ENCODE measurements at regions of chr11 and their contacts with region 1.

Region 1: GRCh38 chr11:66438504-66439466 is at the start of gene MRPL11:
- DNase-seq: peak; percentile 84 to 94
- H3K4me3 ChIP-seq: peak within 1 kb of the TSS; percentile 85 to 98 (median 88)
- H3K27ac ChIP-seq: peak within 1 kb of the TSS; percentile 98
- H3K4me1 ChIP-seq: peaks cover 0 to 5% (median 2%) of the 10 kb centered on the region in 4 experiments; a peak in 2 of 7 replicates
- H3K27me3 ChIP-seq: no peaks in the 10 kb centered on the region
- CTCF ChIP-seq: peak; percentile 72 to 92 (median 77)
- EP300 ChIP-seq: no peak
- POLR2A ChIP-seq: peak; percentile 73 to 74
- RAD21 ChIP-seq: peak; percentile 54 to 64
- total RNA-seq, gene MRPL11: 141 and 152 TPM in 2 replicates

Region 2: GRCh38 chr11:66408488-66409214 is 30.1 kb before region 1 on chr11:
- CTCF ChIA-PET with region 1: interaction called, 259 read pairs
- POLR2A ChIA-PET with region 1: interaction called, 5 read pairs
- DNase-seq: peak; percentile 85 to 100
- H3K4me3 ChIP-seq: peak overlapping the region; percentile 8 to 68 (median 30)
- H3K27ac ChIP-seq: no peak overlapping the region
- H3K4me1 ChIP-seq: peaks cover 0 to 14% (median 11%) of the 10 kb centered on the region in 4 experiments; a peak in 6 of 7 replicates
- H3K27me3 ChIP-seq: peaks cover 0 to 10% (median 2%) of the 10 kb centered on the region in 4 experiments; a peak in 3 of 7 replicates
- CTCF ChIP-seq: peak; percentile 99 to 100 (median 100)
- EP300 ChIP-seq: no peak; a peak in 1 of 3 replicates
- POLR2A ChIP-seq: peak in 1 of 2 experiments; percentile 54; a peak in 2 of 3 replicates
- RAD21 ChIP-seq: peak; percentile 98 to 99

Region 3: DNA sequence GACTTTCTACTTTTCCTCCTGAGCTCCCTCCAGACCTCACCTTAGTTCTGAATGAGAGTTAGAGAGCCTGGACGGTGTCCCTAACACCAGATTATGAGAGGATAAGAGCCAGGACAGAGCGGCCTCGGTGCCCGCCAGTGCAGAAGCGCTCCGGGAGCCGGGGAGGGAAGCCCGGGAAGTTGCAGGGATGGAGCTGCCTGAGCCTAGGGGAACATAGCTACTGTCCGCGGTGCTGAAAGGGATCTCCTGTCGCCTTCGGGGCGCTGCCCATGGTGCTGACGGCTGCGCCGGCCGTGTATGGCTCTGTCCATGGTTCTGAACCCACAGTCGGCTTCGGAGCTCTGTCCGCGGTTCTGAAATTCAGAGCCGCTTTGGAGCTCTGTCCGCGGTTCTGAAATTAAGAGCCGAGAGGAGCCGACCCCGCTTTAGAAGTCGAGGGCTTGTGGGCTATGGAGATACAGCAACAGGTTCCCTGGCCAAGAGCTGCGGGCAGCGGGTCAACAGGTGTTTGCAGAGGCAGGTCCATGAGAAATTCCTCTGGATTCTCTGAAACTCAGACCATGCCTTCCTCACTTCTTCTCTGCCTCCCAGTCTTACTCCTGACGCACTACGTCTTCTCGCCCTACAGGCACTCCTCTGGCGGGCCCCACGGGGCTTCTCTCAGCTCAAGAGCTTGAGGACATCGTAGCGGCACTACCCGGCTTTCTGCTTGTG is 17.1 kb before region 1 on chr11:
- CTCF ChIA-PET with region 1: interaction called, 259 read pairs
- POLR2A ChIA-PET with region 1: interaction called, 15 read pairs
- DNase-seq: peak; percentile 85 to 99
- H3K4me3 ChIP-seq: peak overlapping the region; percentile 17 to 61 (median 54); a peak in 7 of 8 replicates
- H3K27ac ChIP-seq: no peak overlapping the region
- H3K4me1 ChIP-seq: peaks cover 3 to 20% (median 8%) of the 10 kb centered on the region in 4 experiments
- H3K27me3 ChIP-seq: peaks cover 13 to 28% (median 26%) of the 10 kb centered on the region in 4 experiments
- CTCF ChIP-seq: peak in 1 of 3 experiments; percentile 25; a peak in 1 of 4 replicates
- EP300 ChIP-seq: peak; percentile 39 to 59; a peak in 2 of 3 replicates
- POLR2A ChIP-seq: peak in 1 of 2 experiments; percentile 22; a peak in 1 of 3 replicates
- RAD21 ChIP-seq: peak in 1 of 2 experiments; percentile 49; a peak in 2 of 4 replicates

Region 4: DNA sequence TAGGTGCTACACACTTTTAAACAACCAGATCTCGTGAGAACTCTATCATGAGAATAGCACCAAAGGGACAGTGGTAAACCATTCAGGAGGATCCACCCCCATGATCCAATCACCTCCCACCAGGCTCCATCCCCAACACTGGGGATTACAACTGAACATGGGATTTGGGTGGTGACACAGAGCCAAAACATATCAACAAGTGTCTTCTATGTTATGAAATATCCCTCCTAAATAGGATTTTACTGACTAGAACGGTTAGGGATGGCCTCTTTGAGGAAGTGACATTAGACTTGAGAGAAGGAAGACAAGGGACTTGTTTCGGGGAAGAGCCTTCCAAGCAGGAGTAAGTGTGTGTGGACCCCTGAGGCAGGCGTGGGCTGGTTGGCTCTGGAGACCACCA is 11.8 kb after region 1 on chr11:
- CTCF ChIA-PET with region 1: interaction called, 12 read pairs
- POLR2A ChIA-PET with region 1: interaction called, 5 read pairs
- DNase-seq: no peak
- H3K4me3 ChIP-seq: no peak overlapping the region
- H3K27ac ChIP-seq: no peak overlapping the region
- H3K4me1 ChIP-seq: peaks cover 0 to 6% (median 0%) of the 10 kb centered on the region in 4 experiments; a peak in 2 of 7 replicates
- H3K27me3 ChIP-seq: no peaks in the 10 kb centered on the region; a peak in 1 of 7 replicates
- CTCF ChIP-seq: no peak
- EP300 ChIP-seq: no peak
- POLR2A ChIP-seq: no peak
- RAD21 ChIP-seq: no peak

Region 5: GRCh38 chr11:66466225-66467027 is 27.6 kb after region 1 on chr11 and contains the start of gene PELI3:
- CTCF ChIA-PET with region 1: interaction called, 11 read pairs
- POLR2A ChIA-PET with region 1: interaction called, 16 read pairs
- DNase-seq: peak; percentile 90 to 99
- H3K4me3 ChIP-seq: peak within 1 kb of the TSS; percentile 58 to 78 (median 70)
- H3K27ac ChIP-seq: peak within 1 kb of the TSS; percentile 21; the same call in 1 of the 2 replicates
- H3K4me1 ChIP-seq: peaks cover 7 to 25% (median 14%) of the 10 kb centered on the region in 4 experiments
- H3K27me3 ChIP-seq: no peaks in the 10 kb centered on the region; a peak in 1 of 7 replicates
- CTCF ChIP-seq: no peak
- EP300 ChIP-seq: no peak
- POLR2A ChIP-seq: peak in 1 of 2 experiments; percentile 49; a peak in 1 of 3 replicates
- RAD21 ChIP-seq: peak in 1 of 2 experiments; percentile 12; a peak in 1 of 4 replicates
- total RNA-seq, gene PELI3: 7.6 TPM in 2 replicates

Region 6: DNA sequence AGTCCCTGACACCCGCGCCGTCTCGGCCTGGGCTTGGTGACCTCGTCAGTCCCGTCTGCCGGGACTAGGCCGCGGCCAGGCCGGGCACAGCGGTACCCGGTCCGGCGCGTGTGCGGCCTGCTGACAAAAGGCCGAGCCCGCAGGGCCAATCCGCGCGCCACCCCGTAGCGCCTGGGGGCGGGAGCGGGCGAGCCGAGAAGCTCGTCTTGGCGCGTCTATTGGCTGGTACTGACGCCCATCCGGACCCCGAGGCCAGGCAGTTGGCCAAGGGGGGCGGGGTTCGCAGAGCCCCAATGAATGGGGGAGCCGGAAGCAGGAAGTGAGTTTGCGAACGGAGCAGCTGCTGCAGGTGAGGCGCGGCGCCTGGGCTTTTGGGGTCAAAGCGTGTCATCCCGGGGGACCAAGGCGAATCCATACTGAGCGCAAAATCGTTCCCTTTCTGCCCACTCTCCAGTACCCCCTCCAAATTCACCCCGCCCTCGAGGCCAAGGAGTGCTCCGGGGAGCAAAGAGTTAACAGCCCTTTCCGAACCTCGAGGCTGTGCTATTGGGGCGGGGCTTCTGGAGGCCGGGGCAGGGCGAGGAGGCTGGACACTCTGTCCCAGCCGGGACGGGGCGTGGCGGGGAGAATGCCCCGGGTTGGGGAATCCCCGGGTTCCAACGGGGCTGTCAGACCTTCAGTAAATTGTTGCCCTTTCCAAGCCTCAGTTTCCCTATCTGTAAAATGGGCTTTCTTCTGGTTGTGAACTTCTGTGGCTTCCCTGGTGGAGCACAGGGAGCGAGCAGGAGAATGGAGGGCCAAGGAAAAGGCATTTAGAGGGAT is 41.5 kb after region 1 on chr11 and contains the start of gene DPP3:
- CTCF ChIA-PET with region 1: interaction called, 8 read pairs
- POLR2A ChIA-PET with region 1: interaction called, 12 read pairs
- DNase-seq: peak; percentile 93 to 98
- H3K4me3 ChIP-seq: peak within 1 kb of the TSS; percentile 76 to 94 (median 90)
- H3K27ac ChIP-seq: peak within 1 kb of the TSS; percentile 83; the same call in 1 of the 2 replicates
- H3K4me1 ChIP-seq: peaks cover 0 to 6% (median under 1%) of the 10 kb centered on the region in 4 experiments; a peak in 3 of 7 replicates
- H3K27me3 ChIP-seq: no peaks in the 10 kb centered on the region
- CTCF ChIP-seq: no peak
- EP300 ChIP-seq: 0 out of 3 replicates have a peak, but pooled peaks of 1 of the 2 experiments have one; percentile 2
- POLR2A ChIP-seq: peak; percentile 86 to 90
- RAD21 ChIP-seq: no peak
- total RNA-seq, gene DPP3: 82.7 and 86.4 TPM in 2 replicates

Measured in H1 (cell line).